ENCODE measurements at regions of chr10 and their contacts with region 1.

Region 1: DNA sequence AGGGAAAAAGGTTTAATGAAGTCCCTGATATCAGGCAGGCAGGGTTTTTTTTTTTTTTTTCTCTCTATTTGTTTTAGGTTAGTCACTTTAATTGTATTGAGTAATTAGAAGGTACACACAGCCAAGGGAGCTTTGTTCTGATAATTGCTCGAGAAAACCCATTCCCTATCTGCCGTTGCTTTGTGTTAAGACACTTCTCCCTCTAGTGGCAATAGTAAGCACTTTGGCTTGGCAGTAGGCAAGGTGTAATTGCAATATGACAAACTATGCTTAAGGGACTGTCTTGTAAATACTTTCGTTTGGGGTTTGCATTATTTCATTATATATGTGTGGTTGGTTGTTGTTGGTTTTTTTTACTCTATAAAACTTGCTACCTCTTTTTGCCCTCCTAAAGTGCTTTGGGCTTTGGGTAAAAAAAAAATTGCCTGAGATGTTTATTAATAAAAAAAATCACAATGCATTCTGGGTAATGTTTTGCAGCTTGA is 113.4 kb downstream of the BTRC start:
- DNase-seq: peak in 19 of 35 experiments; percentile 2 to 71 (median 11)
- ATAC-seq: peak; percentile 74 to 90 (median 76)
- H3K4me3 ChIP-seq: no peak overlapping the region
- H3K4me3 Mint-ChIP-seq: no peak overlapping the region
- H3K27ac ChIP-seq: no peak overlapping the region
- H3K27ac Mint-ChIP-seq: no peak overlapping the region
- H3K4me1 ChIP-seq: no peaks in the 10 kb centered on the region
- H3K4me1 Mint-ChIP-seq: peaks cover 6 to 9% (median 9%) of the 10 kb centered on the region in 3 donors
- H3K27me3 ChIP-seq: no peaks in the 10 kb centered on the region
- H3K27me3 Mint-ChIP-seq: no peaks in the 10 kb centered on the region

Region 2: GRCh38 chr10:101214446-101215396 is 252.6 kb before region 1 on chr10:
- CTCF ChIA-PET with region 1: interaction called, 16 to 21 read pairs
- POLR2A ChIA-PET with region 1: interaction called in 1 of 2 experiments, 3 read pairs
- DNase-seq: peak; percentile 19 to 87 (median 64)
- ATAC-seq: peak; percentile 79 to 87 (median 81)
- H3K4me3 ChIP-seq: peak overlapping the region in 1 of 2 donors; percentile 17
- H3K4me3 Mint-ChIP-seq: peak overlapping the region; percentile 49 to 70 (median 55)
- H3K27ac ChIP-seq: no peak overlapping the region
- H3K27ac Mint-ChIP-seq: peak overlapping the region in 1 of 2 donors; percentile 66
- H3K4me1 ChIP-seq: peaks cover 5 to 53% of the 10 kb centered on the region in 2 experiments
- H3K4me1 Mint-ChIP-seq: peaks cover 37 to 41% (median 40%) of the 10 kb centered on the region in 3 donors
- H3K27me3 ChIP-seq: peaks cover 26 to 95% of the 10 kb centered on the region in 2 experiments
- H3K27me3 Mint-ChIP-seq: peaks cover 68 to 92% of the 10 kb centered on the region in 2 donors

Region 3: DNA sequence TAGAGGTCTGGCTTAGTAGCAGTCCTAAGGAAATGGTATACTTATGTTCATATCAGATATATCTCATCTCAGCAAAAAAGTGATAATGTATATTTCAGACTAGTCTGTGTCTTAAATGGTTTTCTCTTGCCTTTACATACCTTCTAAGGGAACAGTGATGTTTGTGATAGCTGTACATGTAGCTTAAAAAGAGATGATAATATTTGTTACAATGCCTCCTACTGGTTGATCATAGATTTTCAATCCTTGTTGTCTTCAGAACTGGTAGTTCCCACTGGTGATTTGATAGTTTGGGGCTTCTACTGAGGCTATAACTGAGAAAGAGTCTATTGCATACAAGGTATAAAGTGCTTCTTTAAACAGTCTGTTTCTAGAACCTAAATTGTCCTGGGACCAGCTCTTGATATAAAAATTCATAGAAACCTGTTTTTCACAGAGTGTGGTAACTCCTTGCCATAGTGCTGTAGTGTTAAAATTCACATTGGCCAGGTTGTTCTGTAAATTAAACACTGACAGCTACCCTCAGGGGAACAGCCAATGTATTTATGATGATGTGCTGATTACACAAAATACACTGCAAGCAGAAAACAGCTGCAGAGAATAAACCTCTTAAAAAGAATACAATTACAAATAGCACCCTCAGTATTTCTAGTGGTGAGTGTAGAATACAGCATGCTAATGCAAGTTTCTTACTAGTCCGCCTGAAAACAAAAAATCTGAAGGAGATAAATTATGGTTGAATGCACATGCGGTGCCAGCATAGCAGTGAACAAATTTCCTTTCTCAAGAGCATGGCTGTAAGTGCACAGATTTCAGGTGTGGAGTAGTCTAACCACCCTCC is 23.1 kb before region 1 on chr10:
- CTCF ChIA-PET with region 1: interaction called, 4 to 19 read pairs
- POLR2A ChIA-PET with region 1: no interaction called
- DNase-seq: peak in 1 of 35 experiments; percentile 20
- ATAC-seq: no peak
- H3K4me3 ChIP-seq: no peak overlapping the region
- H3K4me3 Mint-ChIP-seq: no peak overlapping the region
- H3K27ac ChIP-seq: no peak overlapping the region
- H3K27ac Mint-ChIP-seq: no peak overlapping the region
- H3K4me1 ChIP-seq: no peaks in the 10 kb centered on the region
- H3K4me1 Mint-ChIP-seq: peaks cover 2 to 14% (median 3%) of the 10 kb centered on the region in 3 donors
- H3K27me3 ChIP-seq: no peaks in the 10 kb centered on the region
- H3K27me3 Mint-ChIP-seq: no peaks in the 10 kb centered on the region

Region 4: DNA sequence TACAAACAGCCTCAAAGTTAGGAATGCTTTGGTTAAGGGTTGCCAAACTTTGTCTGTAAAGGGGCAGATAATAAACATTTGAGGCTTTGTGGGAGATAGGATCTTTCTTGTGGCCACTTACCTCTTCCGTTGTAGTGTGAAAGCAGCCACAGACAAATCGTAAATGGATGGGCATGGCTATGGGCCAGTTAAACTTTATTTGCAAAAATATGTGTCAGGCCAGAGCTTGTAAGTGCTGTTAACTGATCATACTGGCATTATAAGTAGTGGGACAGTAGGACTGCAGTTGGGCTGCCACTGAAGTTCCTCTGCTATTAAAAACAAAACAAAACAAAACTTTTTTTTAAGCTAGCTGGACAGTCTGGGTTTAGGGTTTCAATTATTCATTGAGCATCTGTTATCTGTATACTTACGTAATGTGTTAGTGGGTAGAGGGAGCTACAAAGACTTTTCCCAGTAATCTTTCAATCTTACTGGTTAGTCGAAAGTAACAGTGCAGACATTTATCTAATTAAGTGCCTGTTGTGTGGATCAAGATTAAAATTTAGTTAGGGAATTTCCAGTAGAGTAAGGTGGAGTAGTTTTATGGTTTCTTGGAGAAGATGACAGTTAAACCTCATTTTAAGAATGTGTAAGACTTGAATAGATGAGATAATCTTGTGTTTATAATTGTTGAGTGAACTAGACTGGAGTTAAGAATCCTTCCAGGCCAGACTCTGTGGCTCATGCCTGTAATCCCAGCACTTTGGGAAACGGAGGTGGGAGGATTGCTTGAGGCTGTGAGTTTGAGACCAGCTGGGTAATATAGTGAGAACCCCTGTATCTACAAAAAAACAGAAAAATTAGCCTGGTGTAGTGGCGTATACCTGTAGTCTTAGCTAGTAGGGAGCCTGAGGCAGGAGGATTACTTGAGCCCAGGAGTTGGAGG is 13.3 kb before region 1 on chr10:
- CTCF ChIA-PET with region 1: interaction called in 1 of 2 experiments, 13 read pairs
- POLR2A ChIA-PET with region 1: no interaction called
- DNase-seq: peak in 3 of 35 experiments; percentile 1 to 10 (median 7)
- ATAC-seq: peak in 2 of 4 experiments; percentile 23 to 31
- H3K4me3 ChIP-seq: no peak overlapping the region
- H3K4me3 Mint-ChIP-seq: no peak overlapping the region
- H3K27ac ChIP-seq: no peak overlapping the region
- H3K27ac Mint-ChIP-seq: no peak overlapping the region
- H3K4me1 ChIP-seq: peaks cover 0 to 2% of the 10 kb centered on the region in 2 experiments
- H3K4me1 Mint-ChIP-seq: peaks cover 33 to 43% (median 36%) of the 10 kb centered on the region in 3 donors
- H3K27me3 ChIP-seq: no peaks in the 10 kb centered on the region
- H3K27me3 Mint-ChIP-seq: no peaks in the 10 kb centered on the region

Measured in T-cell (primary cell).